Natural killer cell (primary cell): ENCODE measurements at regions of chr17 and their contacts with region 1.

Region 1: DNA sequence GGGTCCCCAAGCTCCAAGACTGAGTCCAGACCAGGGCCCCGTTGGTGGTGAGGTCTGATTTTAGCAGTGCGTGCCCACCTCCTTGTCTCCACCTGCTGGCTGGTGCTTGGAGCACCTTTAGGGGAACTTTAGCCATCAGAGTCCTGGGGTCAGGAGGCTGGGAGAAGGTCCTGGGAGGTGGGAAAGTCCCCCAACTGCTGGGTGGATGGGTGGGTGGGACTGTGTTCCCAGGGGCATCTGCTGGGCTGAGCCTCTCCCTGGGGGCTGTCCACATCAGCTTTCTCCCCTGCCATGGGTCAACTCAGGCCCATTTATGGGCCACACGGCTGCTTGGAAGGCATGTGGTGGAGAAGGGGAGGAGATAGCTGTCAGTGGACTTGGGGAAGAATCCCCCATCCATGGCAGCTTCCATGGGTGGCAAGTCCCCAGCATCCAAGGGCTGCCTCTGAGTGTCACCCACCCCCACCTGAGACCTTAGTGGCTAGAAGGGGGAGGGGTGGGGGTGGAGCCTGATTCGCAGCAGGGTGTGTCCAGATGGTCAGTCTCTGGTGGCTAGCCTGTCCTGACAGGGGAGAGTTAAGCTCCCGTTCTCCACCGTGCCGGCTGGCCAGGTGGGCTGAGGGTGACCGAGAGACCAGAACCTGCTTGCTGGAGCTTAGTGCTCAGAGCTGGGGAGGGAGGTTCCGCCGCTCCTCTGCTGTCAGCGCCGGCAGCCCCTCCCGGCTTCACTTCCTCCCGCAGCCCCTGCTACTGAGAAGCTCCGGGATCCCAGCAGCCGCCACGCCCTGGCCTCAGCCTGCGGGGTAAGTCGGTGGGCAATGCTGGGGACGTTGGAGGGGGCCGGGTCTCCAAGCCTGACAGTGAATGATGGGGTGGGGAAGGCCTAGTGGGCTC is at the start of gene TRPV2:
- DNase-seq: peak; percentile 44 to 74
- ATAC-seq: peak; percentile 39 to 56 (median 53)
- H3K4me3 ChIP-seq: peak within 1 kb of the TSS; percentile 62
- H3K4me3 Mint-ChIP-seq: peak within 1 kb of the TSS; percentile 98
- H3K27ac ChIP-seq: peak within 1 kb of the TSS; percentile 93
- H3K27ac Mint-ChIP-seq: peak within 1 kb of the TSS; percentile 98 to 100
- H3K4me1 ChIP-seq: peaks cover 50% of the 10 kb centered on the region
- H3K4me1 Mint-ChIP-seq: peaks cover 45 to 57% of the 10 kb centered on the region in 2 donors
- H3K27me3 ChIP-seq: no peaks in the 10 kb centered on the region
- H3K27me3 Mint-ChIP-seq: no peaks in the 10 kb centered on the region
- CTCF ChIP-seq: peak; percentile 50
- total RNA-seq, gene TRPV2: 138 to 163 (median 147) TPM

Region 2: GRCh38 chr17:16363749-16364536 is 51.3 kb before region 1 on chr17:
- intact Hi-C with region 1: loop called (anchors 1 kb)
- DNase-seq: peak; percentile 60 to 86
- ATAC-seq: peak; percentile 86 to 99 (median 97)
- H3K4me3 ChIP-seq: no peak overlapping the region
- H3K4me3 Mint-ChIP-seq: no peak overlapping the region
- H3K27ac ChIP-seq: no peak overlapping the region
- H3K27ac Mint-ChIP-seq: no peak overlapping the region
- H3K4me1 ChIP-seq: no peaks in the 10 kb centered on the region
- H3K4me1 Mint-ChIP-seq: no peaks in the 10 kb centered on the region
- H3K27me3 ChIP-seq: no peaks in the 10 kb centered on the region
- H3K27me3 Mint-ChIP-seq: no peaks in the 10 kb centered on the region
- CTCF ChIP-seq: peak; percentile 95

Region 3: GRCh38 chr17:16380640-16381495 is 34.4 kb before region 1 on chr17 and contains the start of gene UBB:
- intact Hi-C with region 1: loop called (anchors 1 kb)
- DNase-seq: peak; percentile 91 to 98
- ATAC-seq: peak; percentile 86 to 95 (median 87)
- H3K4me3 ChIP-seq: peak within 1 kb of the TSS; percentile 58
- H3K4me3 Mint-ChIP-seq: peak within 1 kb of the TSS; percentile 99
- H3K27ac ChIP-seq: peak within 1 kb of the TSS; percentile 90
- H3K27ac Mint-ChIP-seq: peak within 1 kb of the TSS; percentile 99 to 100
- H3K4me1 ChIP-seq: peaks cover 22% of the 10 kb centered on the region
- H3K4me1 Mint-ChIP-seq: peaks cover 40 to 45% of the 10 kb centered on the region in 2 donors
- H3K27me3 ChIP-seq: no peaks in the 10 kb centered on the region
- H3K27me3 Mint-ChIP-seq: no peaks in the 10 kb centered on the region
- CTCF ChIP-seq: no peak
- total RNA-seq, gene UBB: 1,492 to 1,665 (median 1,530) TPM

Region 4: GRCh38 chr17:16432017-16432416 is 16.7 kb after region 1 on chr17:
- intact Hi-C with region 1: no loop called
- DNase-seq: no peak
- ATAC-seq: no peak
- H3K4me3 ChIP-seq: no peak overlapping the region
- H3K4me3 Mint-ChIP-seq: no peak overlapping the region
- H3K27ac ChIP-seq: no peak overlapping the region
- H3K27ac Mint-ChIP-seq: peak overlapping the region in 1 of 2 donors; percentile 56
- H3K4me1 ChIP-seq: no peaks in the 10 kb centered on the region
- H3K4me1 Mint-ChIP-seq: peaks cover 13 to 29% of the 10 kb centered on the region in 2 donors
- H3K27me3 ChIP-seq: no peaks in the 10 kb centered on the region
- H3K27me3 Mint-ChIP-seq: no peaks in the 10 kb centered on the region
- CTCF ChIP-seq: no peak

Region 5: DNA sequence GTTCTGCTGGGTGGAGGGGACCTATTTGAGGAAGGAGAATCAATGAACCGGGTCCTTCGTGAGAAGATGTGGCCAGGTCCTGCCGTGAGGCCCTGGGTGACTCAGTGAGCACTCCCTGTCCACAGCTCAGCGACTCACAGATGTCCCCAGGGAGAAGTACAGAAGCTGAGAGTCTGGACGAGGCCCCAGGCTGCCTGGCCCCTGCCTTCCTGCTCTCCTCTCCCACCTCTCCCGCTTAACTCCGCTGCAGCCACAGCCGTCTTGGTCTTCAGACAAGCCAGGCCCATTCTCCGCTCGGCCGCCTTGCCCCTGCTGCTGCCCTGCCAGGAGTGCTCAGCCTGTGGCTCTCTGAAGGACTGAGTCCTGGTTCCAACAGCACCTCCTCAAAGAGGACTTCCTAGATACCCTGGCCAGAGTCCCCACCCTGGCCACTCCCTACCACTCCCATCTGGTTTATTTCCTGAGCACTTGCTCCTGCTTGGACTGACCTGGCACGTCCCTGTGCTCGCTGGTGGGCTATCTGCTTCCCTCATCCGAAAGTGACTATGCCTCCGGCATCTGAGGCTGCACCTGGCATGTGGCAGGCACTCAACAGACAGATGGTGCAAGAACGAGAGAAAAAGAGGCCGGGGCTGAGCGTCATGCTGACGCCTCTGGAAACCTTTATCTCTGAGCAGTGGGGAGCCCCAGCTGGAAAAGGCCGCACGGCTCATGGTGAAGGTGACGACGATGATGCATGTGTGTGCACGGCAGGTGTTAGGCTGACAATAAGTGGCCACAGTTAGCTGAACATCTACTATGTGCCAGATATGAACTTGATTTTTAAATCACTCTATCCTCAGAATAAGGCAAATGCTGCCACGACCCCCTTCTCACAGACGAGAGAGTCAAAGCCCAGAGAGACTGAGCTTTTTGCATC is 565.8 kb after region 1 on chr17:
- intact Hi-C with region 1: no loop called
- DNase-seq: no peak
- ATAC-seq: no peak
- H3K4me3 ChIP-seq: no peak overlapping the region
- H3K4me3 Mint-ChIP-seq: no peak overlapping the region
- H3K27ac ChIP-seq: peak overlapping the region; percentile 78
- H3K27ac Mint-ChIP-seq: no peak overlapping the region
- H3K4me1 ChIP-seq: peaks cover 7% of the 10 kb centered on the region
- H3K4me1 Mint-ChIP-seq: peaks cover 0 to 12% of the 10 kb centered on the region in 2 donors
- H3K27me3 ChIP-seq: no peaks in the 10 kb centered on the region
- H3K27me3 Mint-ChIP-seq: peaks cover 0 to 3% of the 10 kb centered on the region in 2 donors
- CTCF ChIP-seq: no peak